Activated T-helper 2 cell treated with anti-CD3 and anti-CD28 coated beads, Interferon-gamma antibody, Interleukin-2, Interleukin-4, amounts not matched to agents 10 μg/mL and 5 μg/mL and 100 μg/mL, durations not matched to agents 14 hours and 24 hours and 36 hours (primary cell): ENCODE measurements at regions of chr9 and their contacts with region 1.

Region 1: DNA sequence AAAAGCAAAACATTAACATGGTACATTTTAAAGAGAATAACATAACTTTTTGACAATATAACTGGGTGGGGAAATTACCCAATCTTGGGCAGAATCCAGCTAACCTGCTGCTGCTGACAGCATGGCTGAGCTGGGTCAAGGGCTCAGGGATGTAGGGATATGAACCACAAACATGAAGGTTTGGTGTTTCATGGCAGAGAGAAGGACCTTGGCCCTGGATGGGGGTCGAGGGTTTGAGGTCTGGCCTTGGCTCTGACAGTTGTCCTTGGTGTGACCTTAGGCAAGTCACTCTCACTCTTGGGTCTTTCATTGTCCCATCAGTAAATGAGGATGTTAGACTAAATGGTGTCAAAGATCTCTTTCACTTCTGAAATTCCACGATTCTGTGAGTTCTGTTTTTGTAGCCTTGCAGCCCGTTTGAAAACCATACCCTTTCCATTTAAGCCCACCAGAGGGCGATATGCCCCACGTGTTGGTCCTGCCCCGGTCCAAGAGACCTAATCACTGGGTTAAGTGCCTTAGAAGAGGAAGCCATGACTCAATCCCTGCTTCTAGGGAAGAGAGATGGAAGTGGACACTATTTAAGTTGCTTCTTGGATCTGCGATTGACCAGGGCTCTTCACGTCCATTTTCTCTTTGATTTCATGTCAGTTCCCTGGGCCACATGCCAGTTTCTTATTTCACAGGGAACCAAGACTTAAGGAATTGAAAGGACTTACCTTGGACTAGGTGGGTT is 56.8 kb upstream of the TEX48 start:
- DNase-seq: peak; percentile 62
- H3K4me3 Mint-ChIP-seq: no peak overlapping the region
- H3K27ac Mint-ChIP-seq: peak overlapping the region; percentile 83
- H3K4me1 Mint-ChIP-seq: peaks cover 50% of the 10 kb centered on the region
- H3K27me3 Mint-ChIP-seq: no peaks in the 10 kb centered on the region

Region 2: GRCh38 chr9:114696814-114697544 is 41.8 kb before region 1 on chr9:
- intact Hi-C with region 1: no loop called
- DNase-seq: peak; percentile 75
- H3K4me3 Mint-ChIP-seq: peak overlapping the region; percentile 52
- H3K27ac Mint-ChIP-seq: peak overlapping the region; percentile 96
- H3K4me1 Mint-ChIP-seq: peaks cover 87% of the 10 kb centered on the region
- H3K27me3 Mint-ChIP-seq: no peaks in the 10 kb centered on the region

Region 3: DNA sequence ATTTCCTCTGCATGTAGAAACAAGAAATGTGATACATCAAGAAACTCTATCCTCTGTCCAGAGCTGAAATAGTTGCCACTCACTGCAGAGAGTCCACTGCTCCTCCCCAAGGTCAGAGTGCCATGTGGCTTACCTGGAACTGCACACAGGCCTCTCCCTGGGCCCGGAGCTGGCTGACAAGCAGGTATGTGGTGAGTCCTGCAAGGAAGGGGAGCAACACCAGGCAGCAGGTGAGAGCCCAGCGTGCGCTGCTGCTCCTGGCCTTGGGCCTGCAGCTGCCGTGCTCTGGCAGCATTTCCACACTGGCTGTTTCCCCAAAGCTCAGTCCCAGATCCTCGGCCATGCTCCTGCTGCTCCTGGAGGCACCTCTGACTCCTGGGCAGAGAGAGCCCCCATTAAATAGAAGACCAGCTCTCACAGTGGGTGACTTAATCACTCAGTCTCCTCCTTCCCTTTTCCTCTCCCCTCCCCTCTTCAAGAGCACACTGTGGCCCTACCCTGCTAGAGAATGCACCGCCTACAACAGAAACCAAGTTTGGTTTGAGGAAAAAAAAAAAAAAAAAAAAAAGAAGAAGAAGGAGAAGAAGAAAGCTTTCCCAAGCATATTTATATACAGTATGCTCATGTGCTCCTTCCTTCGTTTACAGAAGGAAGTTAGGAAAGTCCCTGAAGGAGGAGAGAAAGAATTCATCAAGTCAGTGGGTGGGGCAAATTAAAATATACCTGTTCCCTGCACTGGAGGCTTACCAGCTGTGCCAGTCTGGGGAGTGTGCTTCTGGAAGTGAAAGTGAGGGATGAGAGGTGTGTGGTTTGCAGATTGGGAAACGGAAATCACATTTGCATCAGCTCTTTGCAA is 67.1 kb after region 1 on chr9 and contains the start of gene TNFSF15:
- intact Hi-C with region 1: no loop called
- DNase-seq: peak; percentile 22
- H3K4me3 Mint-ChIP-seq: peak within 1 kb of the TSS; percentile 10
- H3K27ac Mint-ChIP-seq: peak within 1 kb of the TSS; percentile 30
- H3K4me1 Mint-ChIP-seq: peaks cover 28% of the 10 kb centered on the region
- H3K27me3 Mint-ChIP-seq: peaks cover 31% of the 10 kb centered on the region
- total RNA-seq, gene TNFSF15: 0.25 and 0.28 TPM in 2 replicates

Region 4: DNA sequence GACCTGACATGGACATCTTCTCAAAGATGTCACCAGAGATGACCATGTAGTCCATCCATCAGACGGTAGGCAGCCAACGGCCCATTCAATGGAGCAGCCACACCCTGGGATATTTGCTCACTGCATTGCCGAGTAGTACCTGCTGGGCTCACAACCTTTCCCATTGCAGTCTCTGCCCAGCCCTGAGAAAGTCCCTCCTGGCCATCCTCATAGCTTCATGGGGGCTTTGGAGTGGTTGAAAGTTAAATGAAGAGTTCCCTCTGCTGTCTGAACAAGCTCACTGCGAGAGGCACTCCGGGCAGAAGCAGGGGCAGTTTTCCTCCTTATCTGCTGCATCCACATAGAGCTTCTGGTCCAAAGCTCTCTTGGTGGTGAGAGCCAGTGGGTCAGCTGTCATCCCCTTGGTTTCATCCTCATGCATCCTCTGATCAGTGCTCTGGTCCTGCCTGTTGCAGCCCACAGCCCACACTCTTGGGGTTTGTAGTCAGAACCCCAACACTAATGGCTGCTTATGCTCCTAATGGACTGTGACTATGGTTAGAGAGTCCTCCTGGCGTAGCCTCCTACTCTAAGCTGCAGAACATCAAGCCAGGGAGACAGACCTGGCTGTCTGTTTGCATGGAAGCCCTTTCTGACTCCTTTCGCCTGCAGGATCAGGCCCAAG is 168.3 kb after region 1 on chr9:
- intact Hi-C with region 1: loop called (anchors 1 kb)
- DNase-seq: no peak
- H3K4me3 Mint-ChIP-seq: no peak overlapping the region
- H3K27ac Mint-ChIP-seq: peak overlapping the region; percentile 94
- H3K4me1 Mint-ChIP-seq: peaks cover 84% of the 10 kb centered on the region
- H3K27me3 Mint-ChIP-seq: no peaks in the 10 kb centered on the region

Region 5: GRCh38 chr9:115764645-115765044 is 1025.9 kb after region 1 on chr9:
- intact Hi-C with region 1: no loop called
- DNase-seq: no peak
- H3K4me3 Mint-ChIP-seq: no peak overlapping the region
- H3K27ac Mint-ChIP-seq: no peak overlapping the region
- H3K4me1 Mint-ChIP-seq: no peaks in the 10 kb centered on the region
- H3K27me3 Mint-ChIP-seq: no peaks in the 10 kb centered on the region